Keratinocyte (primary cell): ENCODE measurements at regions of chr1 and their contacts with region 1.

Region 1: DNA sequence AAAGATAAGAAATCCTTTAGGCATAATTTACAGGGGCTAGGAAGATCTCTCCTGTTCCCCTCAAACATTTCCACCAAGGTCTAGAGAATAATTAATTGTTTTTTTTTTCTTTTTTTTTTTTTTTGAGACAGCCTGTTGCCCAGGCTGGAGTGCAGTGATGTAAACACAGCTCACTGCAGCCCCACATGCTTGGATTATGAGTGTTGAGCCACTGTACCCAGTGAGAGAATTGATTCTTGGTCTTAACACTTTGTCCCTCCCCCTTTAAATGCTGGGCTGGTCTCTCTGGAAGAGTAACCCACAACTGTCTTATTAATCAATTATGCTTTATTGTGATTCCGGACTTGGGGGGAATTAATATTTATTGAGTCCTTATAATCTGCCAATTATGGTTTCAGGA is 33.4 kb downstream of the ATF3 start:
- DNase-seq: no peak
- H3K4me3 ChIP-seq: no peak overlapping the region
- H3K27ac ChIP-seq: no peak overlapping the region
- H3K4me1 ChIP-seq: peaks cover 3% of the 10 kb centered on the region
- H3K27me3 ChIP-seq: peaks cover 44% of the 10 kb centered on the region
- CTCF ChIP-seq: no peak

Region 2: DNA sequence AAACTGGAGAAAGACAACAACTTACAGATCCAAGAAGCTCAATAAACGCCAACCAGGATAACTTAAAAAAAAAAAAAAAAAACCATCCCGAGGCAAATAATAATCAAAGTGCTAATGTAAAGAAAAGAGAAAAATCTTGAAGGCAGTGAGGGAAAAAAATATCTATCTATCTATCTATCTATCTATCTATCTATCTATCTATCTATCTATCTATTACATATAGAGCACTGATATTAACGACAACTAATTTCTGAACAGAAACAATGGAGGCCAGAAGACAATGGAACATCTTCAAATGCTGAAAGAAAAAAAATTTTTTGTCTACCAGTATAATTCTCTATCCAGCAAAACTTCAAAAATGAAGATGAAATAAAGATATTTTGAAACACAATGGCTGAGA is 245.3 kb before region 1 on chr1:
- dilution Hi-C with region 1: no loop called
- DNase-seq: no peak
- H3K4me3 ChIP-seq: no peak overlapping the region
- H3K27ac ChIP-seq: no peak overlapping the region
- H3K4me1 ChIP-seq: no peaks in the 10 kb centered on the region
- H3K27me3 ChIP-seq: no peaks in the 10 kb centered on the region
- CTCF ChIP-seq: no peak

Region 3: GRCh38 chr1:212782422-212783154 is 140.6 kb after region 1 on chr1:
- dilution Hi-C with region 1: loop called (anchors 10 kb)
- DNase-seq: no peak
- H3K4me3 ChIP-seq: no peak overlapping the region
- H3K27ac ChIP-seq: no peak overlapping the region
- H3K4me1 ChIP-seq: no peaks in the 10 kb centered on the region
- H3K27me3 ChIP-seq: no peaks in the 10 kb centered on the region
- CTCF ChIP-seq: peak in 2 of 3 experiments; percentile 36 to 52